HAP-1 (cell line): ENCODE measurements at regions of chr19 and their contacts with region 1.

Region 1: DNA sequence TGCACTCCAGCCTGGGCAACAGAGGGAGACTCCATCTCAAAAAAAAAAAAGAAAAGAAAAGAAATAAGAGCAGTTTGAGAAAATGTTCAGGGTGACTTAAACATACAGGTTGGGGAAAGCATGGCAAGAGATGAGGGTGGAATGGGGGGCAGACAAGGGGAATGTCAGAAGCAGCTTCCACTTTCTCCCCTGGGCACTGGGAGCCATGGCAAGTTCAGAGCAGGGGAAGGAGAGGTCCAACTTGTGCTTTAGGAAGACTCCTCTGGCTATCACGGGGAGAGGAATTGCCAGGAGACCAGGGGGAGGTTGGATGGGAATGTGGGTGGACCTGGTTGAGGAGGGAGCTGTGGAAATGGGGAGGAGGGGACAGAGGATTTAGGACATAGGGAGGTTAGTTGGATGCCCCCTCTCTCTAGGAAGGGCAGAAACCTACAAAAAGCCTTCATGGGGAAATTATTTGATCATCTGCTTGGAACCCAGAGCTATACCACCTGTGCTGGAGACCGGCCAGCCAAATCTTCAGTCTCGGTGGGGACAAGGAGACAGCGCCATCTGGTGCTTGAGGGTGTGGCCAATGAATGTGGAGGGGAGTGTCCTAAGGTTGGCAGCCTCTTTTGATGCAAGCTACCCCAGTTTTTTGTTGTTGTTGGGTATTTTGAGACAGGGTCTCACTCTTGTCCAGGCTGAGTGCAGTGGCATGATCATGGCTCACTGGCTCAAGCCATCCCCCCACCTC is 7.3 kb upstream of the STRN4 start:
- DNase-seq: peak in 1 of 2 experiments; percentile 77
- H3K4me3 ChIP-seq: no peak overlapping the region
- H3K4me1 ChIP-seq: no peaks in the 10 kb centered on the region
- H3K27me3 ChIP-seq: no peaks in the 10 kb centered on the region

Region 2: DNA sequence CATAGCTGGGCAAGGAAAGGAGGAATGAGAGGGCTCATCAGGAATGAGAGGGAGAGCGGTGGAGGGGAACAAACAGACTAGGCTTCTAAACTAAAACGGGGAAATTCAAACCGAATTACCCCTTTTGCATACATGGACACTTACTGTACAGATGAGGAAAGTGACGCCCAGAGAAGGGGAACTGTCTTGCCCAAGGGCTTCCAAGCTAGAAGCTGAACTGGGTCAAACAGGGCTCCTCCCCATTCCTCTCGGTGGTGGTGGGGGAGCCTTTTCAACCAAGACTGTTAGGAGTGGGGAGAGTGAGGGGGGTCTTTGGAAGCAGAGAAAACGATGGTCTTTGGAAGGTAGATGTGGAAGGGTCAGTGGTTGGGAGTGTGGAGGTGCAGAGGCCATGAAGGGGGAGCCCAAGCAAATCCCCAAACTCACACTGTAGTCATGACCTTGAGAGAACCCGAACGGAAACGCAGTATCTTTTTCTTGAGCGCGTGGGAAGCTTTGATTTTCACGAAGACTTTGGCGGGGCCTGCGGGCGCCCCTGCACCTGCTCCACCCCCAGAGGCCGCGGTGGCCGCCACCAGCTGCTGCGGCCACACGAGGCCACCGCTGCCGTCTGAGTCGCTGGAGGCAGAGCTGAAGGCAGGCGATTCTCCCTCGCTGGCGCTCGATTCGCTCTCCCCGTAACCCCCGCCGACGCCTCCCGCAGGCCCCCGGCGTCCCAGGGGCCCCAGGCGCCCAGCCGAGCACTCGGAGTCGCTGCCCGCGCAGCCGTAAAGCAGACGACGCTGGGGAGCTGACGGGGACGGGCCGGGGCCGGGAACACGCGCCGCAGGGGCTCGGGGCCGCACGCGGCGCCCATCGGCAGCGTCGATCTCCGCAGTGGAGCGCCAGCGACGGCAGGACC is 105.3 kb before region 1 on chr19:
- in situ Hi-C with region 1: no loop called
- DNase-seq: no peak
- H3K4me3 ChIP-seq: no peak overlapping the region
- H3K4me1 ChIP-seq: no peaks in the 10 kb centered on the region
- H3K27me3 ChIP-seq: no peaks in the 10 kb centered on the region

Region 3: GRCh38 chr19:46840136-46840942 is 86.8 kb after region 1 on chr19:
- in situ Hi-C with region 1: loop called (anchors 5 kb)
- DNase-seq: peak; percentile 56 to 71
- H3K4me3 ChIP-seq: no peak overlapping the region
- H3K4me1 ChIP-seq: no peaks in the 10 kb centered on the region
- H3K27me3 ChIP-seq: no peaks in the 10 kb centered on the region

Region 4: DNA sequence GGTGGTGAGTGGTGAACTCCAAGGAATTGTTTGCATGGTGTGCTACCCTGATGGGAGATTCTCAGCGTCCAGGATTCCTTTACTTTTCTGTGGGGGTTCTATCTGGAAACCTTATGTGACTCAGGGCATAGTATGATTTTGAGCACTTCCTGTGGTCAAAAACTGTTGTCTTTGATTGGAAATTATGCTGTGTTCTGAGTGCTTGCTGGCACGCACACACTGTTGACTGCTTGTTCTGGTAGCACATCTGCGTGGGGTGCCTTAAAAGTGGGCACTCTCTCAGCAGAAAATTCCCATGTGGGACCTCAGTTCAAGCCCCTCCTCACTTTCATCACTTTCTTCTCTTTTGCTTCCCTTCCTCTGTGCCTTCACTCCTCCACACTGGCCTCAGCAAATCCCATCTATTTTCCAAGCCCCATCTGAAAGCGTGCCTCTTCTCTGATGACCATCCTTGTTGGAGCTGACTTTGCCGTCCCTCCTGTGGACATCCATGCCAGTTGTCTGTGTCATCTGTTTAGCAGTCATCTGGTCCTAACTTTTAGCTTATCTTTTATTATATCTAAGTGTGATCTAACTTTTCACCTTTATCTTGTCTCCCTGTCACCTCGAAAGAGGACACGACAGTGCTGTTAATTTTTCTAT is 209.6 kb after region 1 on chr19:
- in situ Hi-C with region 1: no loop called
- DNase-seq: no peak
- H3K4me3 ChIP-seq: no peak overlapping the region
- H3K4me1 ChIP-seq: no peaks in the 10 kb centered on the region; the same call in 1 of the 2 replicates
- H3K27me3 ChIP-seq: no peaks in the 10 kb centered on the region

Region 5: GRCh38 chr19:46984077-46985010 is 230.8 kb after region 1 on chr19:
- in situ Hi-C with region 1: loop called (anchors 10 kb)
- DNase-seq: no peak
- H3K4me3 ChIP-seq: no peak overlapping the region
- H3K4me1 ChIP-seq: no peaks in the 10 kb centered on the region
- H3K27me3 ChIP-seq: no peaks in the 10 kb centered on the region

Region 6: DNA sequence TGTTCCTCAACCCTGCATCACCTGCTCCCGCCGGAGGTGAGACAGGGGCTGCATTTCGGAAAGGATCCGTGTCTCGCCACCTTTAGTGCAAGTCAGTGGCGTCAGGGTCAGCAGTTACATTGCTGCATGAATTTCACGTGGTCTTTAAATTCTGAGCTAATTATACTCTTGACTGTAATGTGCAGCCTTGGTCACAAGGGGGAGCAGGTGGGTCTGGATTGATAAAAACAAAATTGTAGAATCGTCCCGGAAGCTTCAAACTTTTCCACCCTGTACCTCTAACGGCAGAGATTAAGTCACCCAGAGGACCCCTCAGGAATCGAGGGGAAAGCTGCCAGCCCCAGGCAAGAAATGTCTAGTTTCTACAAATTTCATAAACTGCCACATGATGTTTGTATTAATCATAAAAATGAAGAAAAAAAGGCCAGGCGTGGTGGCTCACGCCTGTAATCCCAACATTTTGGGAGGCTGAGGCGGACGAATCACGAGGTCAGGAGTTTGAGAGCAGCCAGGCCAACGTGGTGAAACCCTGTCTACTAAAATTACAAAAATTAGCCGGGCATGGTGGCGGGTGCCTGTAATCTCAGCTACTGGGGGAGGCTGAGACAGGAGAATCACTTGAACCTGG is 457.2 kb after region 1 on chr19:
- in situ Hi-C with region 1: no loop called
- DNase-seq: peak; percentile 72 to 89
- H3K4me3 ChIP-seq: no peak overlapping the region
- H3K4me1 ChIP-seq: peaks cover 7% of the 10 kb centered on the region
- H3K27me3 ChIP-seq: no peaks in the 10 kb centered on the region